PC-3 (cell line): ENCODE measurements at regions of chr17 and their contacts with region 1.

Region 1: GRCh38 chr17:56715613-56716357 is 117.9 kb downstream of the C17orf67 start:
- DNase-seq: peak; percentile 97
- ATAC-seq: peak; percentile 96
- H3K4me3 ChIP-seq: no peak overlapping the region
- H3K27ac ChIP-seq: no peak overlapping the region
- H3K4me1 ChIP-seq: peaks cover 8% of the 10 kb centered on the region; the same call in 1 of the 2 replicates
- H3K27me3 ChIP-seq: no peaks in the 10 kb centered on the region
- CTCF ChIP-seq: peak; percentile 95

Region 2: DNA sequence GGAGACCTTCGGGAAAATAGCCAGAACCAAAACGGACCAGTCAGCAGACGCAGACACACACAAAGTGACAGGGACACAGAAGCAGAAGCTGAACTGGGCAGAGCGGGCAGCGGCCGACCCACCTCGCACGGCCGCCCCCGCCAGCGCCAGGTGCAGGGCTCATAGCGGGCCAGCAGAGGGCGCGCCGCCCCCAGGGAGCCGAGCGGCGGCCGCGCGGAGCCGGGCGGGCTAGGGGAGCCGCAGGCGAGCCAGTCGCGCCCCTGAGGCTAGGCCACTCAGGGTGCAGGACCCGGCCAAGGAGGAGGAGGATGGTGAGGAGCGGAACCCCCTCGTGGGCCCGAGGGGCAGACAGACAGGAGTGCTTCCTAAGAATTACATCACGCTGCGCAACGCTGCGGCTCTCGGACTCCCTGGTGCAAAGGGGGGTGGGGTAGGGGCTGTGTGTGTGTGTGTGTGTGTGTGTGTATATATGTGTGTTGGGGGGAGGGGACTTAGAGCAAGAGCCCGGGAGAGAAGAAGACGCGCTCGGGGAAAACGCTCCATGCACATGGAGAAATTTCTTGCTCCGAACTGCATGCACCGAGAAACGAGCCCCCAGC is 123.2 kb before region 1 on chr17:
- CTCF ChIA-PET with region 1: interaction called, 76 read pairs
- POLR2A ChIA-PET with region 1: no interaction called
- intact Hi-C with region 1: loop called (anchors 1 kb)
- DNase-seq: peak; percentile 81
- ATAC-seq: peak; percentile 36
- H3K4me3 ChIP-seq: peak overlapping the region; percentile 74
- H3K27ac ChIP-seq: no peak overlapping the region
- H3K4me1 ChIP-seq: peaks cover 11% of the 10 kb centered on the region; the same call in 1 of the 2 replicates
- H3K27me3 ChIP-seq: peaks cover 26% of the 10 kb centered on the region
- CTCF ChIP-seq: peak; percentile 93

Region 3: GRCh38 chr17:56653877-56654276 is 61.9 kb before region 1 on chr17:
- CTCF ChIA-PET with region 1: no interaction called
- POLR2A ChIA-PET with region 1: no interaction called
- intact Hi-C with region 1: loop called (anchors 2 kb)
- DNase-seq: peak; percentile 91
- ATAC-seq: peak; percentile 87
- H3K4me3 ChIP-seq: no peak overlapping the region
- H3K27ac ChIP-seq: no peak overlapping the region
- H3K4me1 ChIP-seq: peaks cover 14% of the 10 kb centered on the region
- H3K27me3 ChIP-seq: no peaks in the 10 kb centered on the region
- CTCF ChIP-seq: peak; percentile 91

Region 4: DNA sequence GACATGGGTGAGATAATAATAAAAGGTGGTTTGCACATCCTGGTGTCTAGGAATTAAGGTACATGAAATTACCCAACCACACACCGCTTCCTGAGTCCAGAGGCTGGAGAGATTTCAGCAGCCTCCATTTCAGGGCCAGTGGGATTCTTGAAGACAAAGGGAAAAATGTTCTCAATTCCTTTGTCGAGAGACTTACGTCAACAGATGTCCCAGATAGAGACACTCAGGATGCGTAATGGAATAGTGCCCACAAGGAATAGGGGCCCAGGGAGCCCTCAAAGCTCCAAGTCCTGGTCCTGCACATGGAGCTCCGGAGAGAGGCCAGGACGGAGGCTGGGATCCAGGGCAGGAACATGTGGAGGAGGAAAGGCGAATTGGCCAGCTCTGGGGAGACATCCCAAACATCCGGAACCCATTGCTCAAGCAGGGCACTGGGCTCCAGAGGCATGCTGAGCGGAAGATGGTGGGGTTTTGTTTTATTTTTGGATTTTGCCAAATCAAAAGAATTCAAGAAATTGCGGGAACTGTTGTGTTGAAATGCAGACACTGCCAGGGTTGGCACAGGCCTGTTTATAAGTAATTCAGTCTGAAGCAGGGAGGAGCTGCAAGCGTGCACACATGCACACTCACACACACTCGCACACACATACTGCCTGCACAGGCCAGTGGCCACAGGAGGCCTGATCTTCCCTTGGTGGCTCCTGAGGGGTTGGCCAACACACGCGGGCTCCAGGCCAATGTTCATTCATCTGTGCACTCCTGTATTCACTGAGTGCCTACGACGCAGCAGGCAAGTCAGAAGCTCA is 25.1 kb before region 1 on chr17:
- CTCF ChIA-PET with region 1: interaction called, 12 read pairs
- POLR2A ChIA-PET with region 1: no interaction called
- intact Hi-C with region 1: no loop called
- DNase-seq: no peak
- ATAC-seq: no peak
- H3K4me3 ChIP-seq: no peak overlapping the region
- H3K27ac ChIP-seq: no peak overlapping the region
- H3K4me1 ChIP-seq: no peaks in the 10 kb centered on the region
- H3K27me3 ChIP-seq: no peaks in the 10 kb centered on the region
- CTCF ChIP-seq: no peak

Region 5: DNA sequence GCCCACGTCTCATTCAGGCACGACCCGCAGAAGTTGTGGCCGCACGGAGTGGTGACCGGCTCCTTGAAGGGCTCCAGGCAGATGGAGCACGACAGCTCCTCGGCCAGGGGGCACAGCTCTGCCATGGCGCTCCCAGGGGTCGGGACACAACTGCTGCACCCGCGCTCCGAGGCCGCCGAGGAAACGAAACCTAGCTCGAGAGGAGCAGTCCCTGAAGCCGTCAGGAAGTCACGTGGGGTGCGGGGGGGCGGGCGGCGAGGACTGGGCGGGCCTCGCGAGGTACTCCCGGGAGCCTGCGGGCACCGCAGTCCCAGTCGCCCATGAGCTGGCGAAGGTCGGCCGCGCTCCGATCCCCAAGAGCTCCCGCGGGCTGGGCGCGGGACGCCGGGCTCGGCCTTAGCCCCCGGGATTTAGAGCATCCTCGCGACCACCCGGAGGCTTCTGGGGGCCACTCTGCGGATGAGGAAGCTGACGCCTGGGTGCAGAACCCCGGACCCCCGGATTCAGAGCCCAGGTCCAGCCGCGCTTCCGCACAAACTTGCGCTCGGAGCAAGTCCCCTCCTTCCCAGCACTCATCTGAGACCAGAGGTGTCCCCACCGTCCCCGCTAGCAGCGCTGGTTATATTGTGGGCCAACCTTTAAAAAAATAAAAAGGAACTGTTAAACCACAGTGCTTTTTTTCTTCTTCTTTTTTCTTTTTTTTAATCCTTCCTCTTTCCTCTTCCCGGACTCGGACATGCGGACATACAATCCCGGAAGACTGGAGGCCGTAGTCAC is 198.3 kb after region 1 on chr17 and contains the start of gene TRIM25:
- CTCF ChIA-PET with region 1: no interaction called
- POLR2A ChIA-PET with region 1: interaction called, 11 read pairs
- intact Hi-C with region 1: no loop called
- DNase-seq: peak; percentile 92
- ATAC-seq: peak; percentile 67
- H3K4me3 ChIP-seq: peak within 1 kb of the TSS; percentile 87
- H3K27ac ChIP-seq: peak within 1 kb of the TSS; percentile 94
- H3K4me1 ChIP-seq: peaks cover 45% of the 10 kb centered on the region
- H3K27me3 ChIP-seq: no peaks in the 10 kb centered on the region
- CTCF ChIP-seq: no peak
- total RNA-seq, gene TRIM25: 44.0 and 60.2 TPM in 2 replicates